ENCODE measurements at regions of chr19 and their contacts with region 1.

Region 1: GRCh38 chr19:48784540-48784939 is 26.3 kb downstream of the BCAT2 start:
- DNase-seq: no peak
- H3K4me3 Mint-ChIP-seq: no peak overlapping the region
- H3K27ac Mint-ChIP-seq: no peak overlapping the region
- H3K4me1 Mint-ChIP-seq: peaks cover 3% of the 10 kb centered on the region
- H3K27me3 Mint-ChIP-seq: peaks cover 35% of the 10 kb centered on the region

Region 2: DNA sequence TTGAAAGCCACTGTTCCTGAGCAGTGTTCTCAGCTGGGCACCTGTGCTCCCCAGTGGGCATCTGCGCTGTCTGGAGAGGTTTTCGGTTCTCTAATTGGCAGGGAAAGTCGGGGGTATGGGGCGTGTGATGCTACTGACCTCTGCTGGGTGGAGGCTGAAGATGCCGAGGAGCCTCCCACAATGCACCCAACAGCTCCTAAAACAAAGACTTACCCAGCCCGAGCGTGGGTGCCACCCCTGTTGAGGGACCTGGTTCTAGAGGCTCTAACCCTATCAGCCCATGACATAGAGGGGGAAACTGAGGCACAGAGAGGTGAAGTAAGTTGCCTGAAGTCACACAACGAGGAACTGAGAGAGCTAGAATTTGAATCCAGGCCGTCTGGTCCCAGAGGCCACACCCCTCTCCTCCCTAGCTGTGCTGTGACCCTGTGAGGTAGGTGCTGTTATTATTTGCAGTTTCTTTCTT is 175.7 kb before region 1 on chr19:
- CTCF ChIA-PET with region 1: no interaction called
- DNase-seq: peak; percentile 75
- H3K4me3 Mint-ChIP-seq: no peak overlapping the region
- H3K27ac Mint-ChIP-seq: peak overlapping the region; percentile 77
- H3K4me1 Mint-ChIP-seq: peaks cover 5% of the 10 kb centered on the region
- H3K27me3 Mint-ChIP-seq: no peaks in the 10 kb centered on the region

Region 3: DNA sequence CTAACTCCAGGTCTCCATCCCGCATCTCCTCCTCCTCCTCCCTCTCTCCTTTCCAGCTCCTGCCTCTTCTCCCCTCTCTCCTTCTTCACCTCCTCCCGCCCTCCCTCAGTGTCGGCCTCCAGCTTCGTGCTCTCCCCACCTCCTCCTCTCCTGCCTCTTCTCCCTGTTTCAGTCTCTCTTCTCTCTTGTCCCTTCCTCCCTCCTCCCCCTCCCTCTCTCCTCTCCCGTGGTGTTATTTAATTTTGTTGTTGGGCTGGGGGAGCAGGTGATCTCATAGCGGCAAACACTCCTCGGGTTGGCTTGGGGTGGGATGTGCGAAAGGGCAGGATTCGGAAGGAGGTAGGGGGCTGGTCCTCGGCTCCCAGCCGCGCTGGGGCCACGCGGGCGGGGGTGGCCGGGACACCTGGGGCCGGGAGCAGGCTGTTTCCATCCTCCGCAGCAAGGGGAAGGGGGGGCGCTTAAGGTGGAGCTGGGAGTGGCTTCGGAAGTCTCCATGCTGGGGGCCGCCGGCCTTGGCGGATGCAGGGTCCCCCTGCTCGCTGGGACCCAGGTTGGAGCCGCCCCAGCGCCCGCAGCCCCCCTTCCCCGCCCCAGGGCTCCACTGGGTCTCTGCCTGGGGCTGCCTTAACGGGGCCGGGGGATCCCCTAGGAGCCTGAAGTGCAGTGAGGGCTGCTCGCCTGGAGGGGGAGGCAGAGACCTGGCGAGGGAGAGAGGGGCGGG is 138.4 kb before region 1 on chr19 and contains the start of gene CA11:
- CTCF ChIA-PET with region 1: interaction called, 13 read pairs
- DNase-seq: peak; percentile 95
- H3K4me3 Mint-ChIP-seq: peak within 1 kb of the TSS; percentile 75
- H3K27ac Mint-ChIP-seq: peak within 1 kb of the TSS; percentile 81
- H3K4me1 Mint-ChIP-seq: peaks cover 55% of the 10 kb centered on the region
- H3K27me3 Mint-ChIP-seq: peaks cover 16% of the 10 kb centered on the region

Region 4: GRCh38 chr19:48795055-48795684 is 10.6 kb after region 1 on chr19:
- CTCF ChIA-PET with region 1: interaction called, 17 read pairs
- DNase-seq: peak; percentile 92
- H3K4me3 Mint-ChIP-seq: peak overlapping the region; percentile 86
- H3K27ac Mint-ChIP-seq: peak overlapping the region; percentile 80
- H3K4me1 Mint-ChIP-seq: peaks cover 8% of the 10 kb centered on the region
- H3K27me3 Mint-ChIP-seq: no peaks in the 10 kb centered on the region

Region 5: DNA sequence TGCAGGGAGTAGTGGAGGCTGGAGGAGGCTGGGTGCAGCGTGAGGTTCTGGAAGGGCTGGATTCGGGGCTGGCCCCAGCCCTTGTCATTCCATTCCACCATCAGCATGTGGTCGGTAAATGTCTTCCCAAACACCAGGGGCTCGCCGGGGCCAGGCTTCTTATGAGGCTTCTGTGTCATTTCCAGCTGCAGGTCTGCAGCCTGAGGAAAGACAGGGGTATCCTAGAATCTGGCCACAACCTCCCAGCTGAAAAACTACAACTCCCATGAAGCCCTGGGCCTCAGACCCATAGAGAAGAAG is 21.9 kb after region 1 on chr19:
- CTCF ChIA-PET with region 1: interaction called, 10 read pairs
- DNase-seq: peak; percentile 68
- H3K4me3 Mint-ChIP-seq: no peak overlapping the region
- H3K27ac Mint-ChIP-seq: no peak overlapping the region
- H3K4me1 Mint-ChIP-seq: peaks cover 24% of the 10 kb centered on the region
- H3K27me3 Mint-ChIP-seq: no peaks in the 10 kb centered on the region

Region 6: GRCh38 chr19:48835734-48836088 is 51.2 kb after region 1 on chr19:
- CTCF ChIA-PET with region 1: interaction called, 176 read pairs
- DNase-seq: peak; percentile 96
- H3K4me3 Mint-ChIP-seq: peak overlapping the region; percentile 76
- H3K27ac Mint-ChIP-seq: peak overlapping the region; percentile 77
- H3K4me1 Mint-ChIP-seq: peaks cover 23% of the 10 kb centered on the region
- H3K27me3 Mint-ChIP-seq: peaks cover 26% of the 10 kb centered on the region

Region 7: GRCh38 chr19:48842789-48843162 is 58.2 kb after region 1 on chr19:
- CTCF ChIA-PET with region 1: interaction called, 176 read pairs
- DNase-seq: peak; percentile 65
- H3K4me3 Mint-ChIP-seq: no peak overlapping the region
- H3K27ac Mint-ChIP-seq: no peak overlapping the region
- H3K4me1 Mint-ChIP-seq: peaks cover 6% of the 10 kb centered on the region
- H3K27me3 Mint-ChIP-seq: peaks cover 2% of the 10 kb centered on the region

Region 8: GRCh38 chr19:48896191-48896720 is 111.7 kb after region 1 on chr19:
- CTCF ChIA-PET with region 1: no interaction called
- DNase-seq: peak; percentile 56
- H3K4me3 Mint-ChIP-seq: no peak overlapping the region
- H3K27ac Mint-ChIP-seq: no peak overlapping the region
- H3K4me1 Mint-ChIP-seq: peaks cover 24% of the 10 kb centered on the region
- H3K27me3 Mint-ChIP-seq: peaks cover 55% of the 10 kb centered on the region

Measured in activated naive CD4-positive, alpha-beta T cell treated with anti-CD3 and anti-CD28 coated beads, Interleukin-2, amount 10 ng/mL, durations not matched to agents 7 days and 5 days (primary cell).